Activated T-helper 1 cell treated with anti-CD3 and anti-CD28 coated beads, Interleukin-12 subunit alpha, Interleukin-12 subunit beta, Interleukin-2, Interleukin-4 antibody, amounts not matched to agents 30 ng/mL and 10 ng/mL and 1 ng/mL, durations not matched to agents 14 hours and 24 hours and 36 hours (primary cell): ENCODE measurements at regions of chr15 and their contacts with region 1.

Region 1: DNA sequence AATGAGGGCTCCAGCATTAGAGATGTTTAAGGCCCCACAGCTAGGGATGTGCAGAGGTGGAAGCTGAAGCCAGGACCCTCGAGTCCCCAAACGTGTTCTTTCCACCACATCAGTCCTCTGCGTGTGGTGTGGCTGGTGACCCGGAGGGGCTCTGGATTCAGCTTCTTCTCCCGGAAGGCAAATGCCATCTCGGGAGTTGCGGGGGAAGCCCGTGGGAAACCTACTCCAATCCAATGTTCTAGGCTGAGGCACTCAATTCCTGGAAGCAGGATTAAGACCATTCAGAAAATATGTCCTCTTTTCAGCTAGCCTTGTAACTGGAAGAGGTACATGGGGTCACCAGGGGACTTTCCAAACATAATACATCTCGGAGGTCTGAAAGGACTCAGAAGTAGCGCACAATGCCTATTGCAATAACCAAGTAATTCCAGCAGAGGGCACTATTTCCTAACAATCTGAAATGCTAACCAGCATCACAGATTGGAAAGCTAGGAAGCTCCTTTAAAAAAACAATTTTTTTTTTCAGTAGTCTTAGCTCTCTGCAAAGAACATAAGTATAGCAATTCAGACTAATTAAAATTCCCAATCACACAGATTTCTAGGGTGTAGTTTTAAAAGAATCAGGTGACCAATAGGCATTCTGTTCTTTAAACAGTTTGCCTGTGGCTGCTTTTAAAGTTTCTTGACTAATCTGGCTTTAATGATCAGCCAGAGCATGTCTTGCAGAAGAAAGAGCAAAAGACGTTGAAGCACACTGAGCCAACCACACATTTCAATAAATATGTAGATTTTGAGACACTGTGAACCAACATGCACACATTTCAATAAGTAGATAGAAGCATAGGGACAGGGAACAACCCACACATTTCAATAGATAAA is 36.1 kb downstream of the BNC1 start:
- DNase-seq: peak; percentile 29
- H3K4me3 Mint-ChIP-seq: no peak overlapping the region
- H3K27ac Mint-ChIP-seq: no peak overlapping the region
- H3K4me1 Mint-ChIP-seq: no peaks in the 10 kb centered on the region
- H3K27me3 Mint-ChIP-seq: peaks cover 28% of the 10 kb centered on the region

Region 2: GRCh38 chr15:82985688-82986441 is 262.5 kb before region 1 on chr15 and contains the start of gene RAMAC:
- intact Hi-C with region 1: no loop called
- DNase-seq: peak; percentile 86
- H3K4me3 Mint-ChIP-seq: peak within 1 kb of the TSS; percentile 98
- H3K27ac Mint-ChIP-seq: peak within 1 kb of the TSS; percentile 73
- H3K4me1 Mint-ChIP-seq: peaks cover 25% of the 10 kb centered on the region
- H3K27me3 Mint-ChIP-seq: no peaks in the 10 kb centered on the region
- total RNA-seq, gene RAMAC: 26.1 and 27.3 TPM in 2 replicates

Region 3: GRCh38 chr15:83380682-83381081 is 132.3 kb after region 1 on chr15:
- intact Hi-C with region 1: loop called (anchors 1 kb)
- DNase-seq: peak; percentile 19
- H3K4me3 Mint-ChIP-seq: no peak overlapping the region
- H3K27ac Mint-ChIP-seq: no peak overlapping the region
- H3K4me1 Mint-ChIP-seq: peaks cover 8% of the 10 kb centered on the region
- H3K27me3 Mint-ChIP-seq: peaks cover 29% of the 10 kb centered on the region

Region 4: DNA sequence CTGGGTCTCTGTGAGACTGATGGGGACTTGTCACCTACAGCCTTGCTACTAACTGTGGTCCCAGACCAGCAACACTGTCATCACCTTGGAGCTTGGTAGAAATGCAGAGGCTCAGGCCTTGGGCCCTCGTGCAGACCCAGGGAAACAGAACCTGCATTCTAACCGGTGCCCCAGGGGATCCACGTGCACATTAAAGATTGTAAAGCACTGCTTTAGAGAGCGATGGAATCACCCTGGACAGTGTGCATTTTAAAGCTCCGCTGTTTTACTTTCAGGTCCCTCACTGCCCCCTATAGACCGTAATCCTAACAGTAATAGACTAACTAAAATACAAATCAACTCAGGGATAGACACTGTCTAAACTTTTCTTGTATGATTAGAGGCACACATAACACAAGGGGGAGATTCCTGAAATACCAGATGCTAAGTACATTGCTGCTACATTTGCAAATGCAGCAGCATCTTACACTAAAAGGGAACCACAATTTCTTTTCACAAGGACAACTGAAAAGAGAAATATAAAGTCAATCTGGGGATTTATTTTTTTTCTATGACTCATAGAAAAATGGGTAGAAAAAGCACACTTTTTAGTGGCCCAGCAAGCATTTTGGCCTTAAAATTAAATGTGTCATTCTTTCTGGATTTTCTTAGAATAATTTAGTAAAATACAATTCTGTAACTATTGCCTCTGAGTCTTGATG is 188.2 kb after region 1 on chr15:
- intact Hi-C with region 1: loop called (anchors 2 kb)
- DNase-seq: no peak
- H3K4me3 Mint-ChIP-seq: no peak overlapping the region
- H3K27ac Mint-ChIP-seq: no peak overlapping the region
- H3K4me1 Mint-ChIP-seq: peaks cover 6% of the 10 kb centered on the region
- H3K27me3 Mint-ChIP-seq: peaks cover 9% of the 10 kb centered on the region